PC-9 (cell line): ENCODE measurements at regions of chr15 and their contacts with region 1.

Region 1: DNA sequence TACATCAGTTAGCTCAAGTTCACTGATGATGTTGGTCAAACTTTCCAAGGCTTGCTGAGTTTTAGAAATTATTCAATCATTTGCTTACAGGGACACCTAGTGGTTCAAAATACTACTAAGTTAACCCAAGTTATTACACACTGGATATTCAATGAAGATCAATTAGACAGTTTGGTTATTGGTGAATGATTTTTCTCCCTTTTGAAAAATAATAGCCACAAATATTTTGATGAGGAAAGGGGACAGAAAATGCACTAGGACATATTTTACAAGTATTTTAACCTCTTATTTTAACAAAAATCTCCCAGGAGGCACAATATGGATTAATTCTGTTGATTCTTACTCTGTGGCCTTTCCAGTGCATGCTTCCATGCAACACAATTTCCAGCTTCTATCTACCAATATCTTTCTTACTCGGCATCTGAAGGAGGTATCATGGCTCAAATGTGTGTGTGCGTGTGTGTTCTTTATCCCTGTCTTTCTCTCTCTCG is 20.1 kb upstream of the GOLGA6L2 start:
- DNase-seq: no peak
- H3K4me3 ChIP-seq: no peak overlapping the region
- H3K27ac ChIP-seq: no peak overlapping the region
- H3K4me1 ChIP-seq: no peaks in the 10 kb centered on the region
- H3K27me3 ChIP-seq: peaks cover 28% of the 10 kb centered on the region
- CTCF ChIP-seq: peak; percentile 57

Region 2: GRCh38 chr15:23039151-23039916 is 427.8 kb before region 1 on chr15 and contains the start of gene TUBGCP5:
- CTCF ChIA-PET with region 1: no interaction called
- POLR2A ChIA-PET with region 1: no interaction called
- intact Hi-C with region 1: loop called (anchors 5 kb)
- DNase-seq: peak; percentile 87 to 97
- H3K4me3 ChIP-seq: peak within 1 kb of the TSS; percentile 70
- H3K27ac ChIP-seq: peak within 1 kb of the TSS; percentile 19; the same call in 1 of the 2 replicates
- H3K4me1 ChIP-seq: peaks cover 9% of the 10 kb centered on the region
- H3K27me3 ChIP-seq: no peaks in the 10 kb centered on the region
- CTCF ChIP-seq: no peak
- total RNA-seq, gene TUBGCP5: 10.7 and 11.2 TPM in 2 replicates

Region 3: DNA sequence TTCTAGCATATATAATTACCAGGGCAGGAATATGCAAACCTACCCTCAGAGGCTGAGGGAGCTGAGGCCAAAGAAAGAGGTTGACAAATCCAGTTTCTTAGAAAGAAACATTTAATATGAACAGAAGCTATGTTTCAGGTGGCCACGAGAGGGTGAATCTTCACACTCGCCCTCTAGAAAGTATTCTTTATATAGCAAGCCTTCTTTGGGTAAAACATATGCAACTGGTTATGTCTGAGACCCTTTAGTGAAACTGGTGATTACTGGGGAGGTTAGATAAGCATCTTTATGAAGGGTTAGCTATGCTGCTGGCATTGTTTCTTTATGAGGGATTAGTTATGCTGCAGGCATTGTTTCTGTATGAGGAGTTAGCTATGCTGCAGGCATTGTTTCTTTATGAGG is 30.6 kb after region 1 on chr15:
- CTCF ChIA-PET with region 1: no interaction called
- POLR2A ChIA-PET with region 1: no interaction called
- intact Hi-C with region 1: no loop called
- DNase-seq: peak in 1 of 2 experiments; percentile 9
- H3K4me3 ChIP-seq: no peak overlapping the region
- H3K27ac ChIP-seq: no peak overlapping the region
- H3K4me1 ChIP-seq: no peaks in the 10 kb centered on the region
- H3K27me3 ChIP-seq: peaks cover 7% of the 10 kb centered on the region; the same call in 1 of the 2 replicates
- CTCF ChIP-seq: peak; percentile 63

Region 4: GRCh38 chr15:23565395-23566070 is 98.4 kb after region 1 on chr15 and contains the start of gene MKRN3:
- CTCF ChIA-PET with region 1: no interaction called
- POLR2A ChIA-PET with region 1: no interaction called
- intact Hi-C with region 1: no loop called
- DNase-seq: peak; percentile 71 to 84
- H3K4me3 ChIP-seq: peak within 1 kb of the TSS; percentile 93
- H3K27ac ChIP-seq: peak within 1 kb of the TSS; percentile 94
- H3K4me1 ChIP-seq: peaks cover 35% of the 10 kb centered on the region
- H3K27me3 ChIP-seq: no peaks in the 10 kb centered on the region
- CTCF ChIP-seq: no peak
- total RNA-seq, gene MKRN3: 26.1 and 28.0 TPM in 2 replicates